Esophagus squamous epithelium (tissue), 5 donors: ENCODE measurements at regions of chr5 and their contacts with region 1.

Region 1: DNA sequence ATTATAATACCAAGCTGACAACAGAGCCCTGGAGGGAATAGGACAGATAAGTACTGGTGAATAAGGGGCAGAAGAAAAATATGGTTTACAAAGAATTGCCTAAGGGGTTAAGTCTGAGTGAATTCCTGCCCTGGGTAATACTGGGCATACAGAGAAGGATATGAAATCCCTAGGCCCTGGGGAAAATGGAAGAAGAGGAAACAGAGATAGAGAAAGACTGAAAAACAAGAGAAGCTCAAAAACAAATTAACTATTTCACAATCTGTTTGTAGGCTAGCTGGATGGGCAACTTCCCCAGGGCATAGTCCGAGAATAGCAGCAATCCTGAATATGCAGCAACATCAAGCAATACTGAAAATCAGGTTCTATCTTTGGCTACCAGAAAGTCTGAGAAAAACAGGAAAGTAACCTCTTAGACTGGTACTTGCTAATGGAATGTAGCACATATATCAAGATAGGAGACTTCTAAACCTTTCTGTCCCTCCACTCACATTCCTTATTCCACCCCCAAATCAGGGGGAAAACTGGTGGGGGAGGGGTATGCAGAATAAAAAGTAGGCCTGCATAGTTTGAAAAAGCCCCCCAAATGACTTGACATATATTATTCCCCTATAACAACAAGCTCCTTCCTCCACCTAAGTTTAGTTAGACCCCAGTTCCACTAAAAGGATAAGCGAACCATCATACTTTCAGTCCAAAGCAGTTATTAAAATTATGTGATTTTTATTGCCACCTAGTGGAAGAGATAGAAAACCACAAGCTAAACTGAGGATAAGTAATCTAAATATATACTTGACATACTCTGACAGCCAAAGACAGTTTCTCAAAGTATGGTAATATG is 20.6 kb downstream of the SLC38A9 start:
- DNase-seq: no peak
- H3K4me3 ChIP-seq: peak overlapping the region in 1 of 4 donors; percentile 24
- H3K27ac ChIP-seq: peak overlapping the region in 3 of 4 donors; percentile 22 to 54 (median 40)
- H3K4me1 ChIP-seq: peaks cover 0 to 20% (median 0%) of the 10 kb centered on the region in 3 donors
- H3K27me3 ChIP-seq: no peaks in the 10 kb centered on the region
- CTCF ChIP-seq: peak; percentile 30 to 79 (median 61)
- POLR2A ChIP-seq: no peak

Region 2: GRCh38 chr5:55344392-55344992 is 347.0 kb before region 1 on chr5:
- intact Hi-C with region 1: loop called (anchors 10 kb)
- DNase-seq: no peak
- H3K4me3 ChIP-seq: no peak overlapping the region
- H3K27ac ChIP-seq: no peak overlapping the region
- H3K4me1 ChIP-seq: no peaks in the 10 kb centered on the region
- H3K27me3 ChIP-seq: no peaks in the 10 kb centered on the region
- CTCF ChIP-seq: peak; percentile 46 to 88 (median 84)
- POLR2A ChIP-seq: no peak

Region 3: GRCh38 chr5:55407059-55407684 is 284.3 kb before region 1 on chr5:
- intact Hi-C with region 1: loop called (anchors 5 kb)
- DNase-seq: no peak
- H3K4me3 ChIP-seq: no peak overlapping the region
- H3K27ac ChIP-seq: no peak overlapping the region
- H3K4me1 ChIP-seq: peaks cover 0 to 4% (median 0%) of the 10 kb centered on the region in 3 donors
- H3K27me3 ChIP-seq: no peaks in the 10 kb centered on the region
- CTCF ChIP-seq: peak in 5 of 6 experiments; percentile 48 to 68 (median 58)
- POLR2A ChIP-seq: no peak

Region 4: DNA sequence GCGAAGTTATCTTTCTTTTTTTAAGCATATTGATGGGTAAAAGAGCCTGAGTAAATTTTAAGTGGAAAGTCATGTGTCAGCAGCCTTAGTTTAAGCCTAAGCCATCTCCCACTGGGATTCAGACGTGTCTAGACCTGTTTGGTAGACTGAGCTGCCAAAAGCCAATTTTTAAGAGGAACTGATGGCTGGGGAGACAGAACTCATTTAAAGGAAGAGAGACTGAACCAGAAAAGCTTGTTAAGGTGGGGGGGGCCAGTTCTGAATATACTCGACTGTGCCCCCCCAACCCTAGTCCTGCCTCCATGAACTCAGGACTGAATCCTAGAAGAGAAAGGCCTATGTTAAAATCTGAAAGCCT is 98.4 kb before region 1 on chr5:
- intact Hi-C with region 1: no loop called
- DNase-seq: no peak
- H3K4me3 ChIP-seq: no peak overlapping the region
- H3K27ac ChIP-seq: peak overlapping the region in 2 of 4 donors; percentile 47 to 53
- H3K4me1 ChIP-seq: peaks cover 9 to 26% (median 18%) of the 10 kb centered on the region in 3 donors
- H3K27me3 ChIP-seq: no peaks in the 10 kb centered on the region
- CTCF ChIP-seq: no peak
- POLR2A ChIP-seq: no peak

Region 5: DNA sequence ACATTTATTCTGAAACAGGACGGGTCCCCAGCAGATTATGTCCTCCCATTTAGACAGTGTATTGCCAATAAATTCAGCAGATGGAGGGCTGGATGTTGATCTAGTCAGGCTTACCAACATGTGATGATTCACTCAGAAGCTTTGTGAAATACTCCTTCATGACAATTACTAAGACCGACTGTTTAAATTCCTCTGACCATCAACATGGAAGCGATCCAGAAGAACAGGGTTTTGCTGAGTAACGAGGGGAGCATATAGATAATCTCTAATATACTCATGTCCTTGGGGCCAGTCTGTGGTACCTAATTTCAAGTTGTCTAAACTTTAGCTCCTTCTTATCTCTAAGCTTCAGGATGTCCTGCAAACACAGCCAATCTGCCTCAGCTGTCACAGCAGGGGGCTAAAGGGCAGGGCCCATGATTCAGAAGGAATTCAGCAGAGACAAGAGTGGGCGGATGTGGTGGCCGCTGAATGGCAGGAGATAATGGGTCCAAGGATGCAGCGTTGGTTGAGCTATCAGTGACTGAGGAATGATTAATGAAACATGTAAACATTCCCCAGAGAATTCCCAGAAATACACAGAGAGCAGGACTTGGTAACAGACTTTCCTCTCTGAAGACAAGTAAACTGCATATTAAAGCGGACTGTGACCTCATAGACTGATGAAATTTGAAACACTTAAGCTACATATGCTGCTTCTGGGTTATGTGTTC is 432.2 kb after region 1 on chr5:
- intact Hi-C with region 1: no loop called
- DNase-seq: peak; percentile 1
- H3K4me3 ChIP-seq: no peak overlapping the region
- H3K27ac ChIP-seq: peak overlapping the region in 2 of 4 donors; percentile 68 to 72
- H3K4me1 ChIP-seq: peaks cover 0 to 11% (median 0%) of the 10 kb centered on the region in 3 donors
- H3K27me3 ChIP-seq: no peaks in the 10 kb centered on the region
- CTCF ChIP-seq: no peak
- POLR2A ChIP-seq: no peak